Left ventricle myocardium superior (tissue), 1 donor: ENCODE measurements at regions of chr11 and their contacts with region 1.

Region 1: GRCh38 chr11:121451986-121452608 is at the start of gene SORL1:
- DNase-seq: peak; percentile 87
- ATAC-seq: peak; percentile 95
- total RNA-seq, gene SORL1: 11.9 TPM

Region 2: DNA sequence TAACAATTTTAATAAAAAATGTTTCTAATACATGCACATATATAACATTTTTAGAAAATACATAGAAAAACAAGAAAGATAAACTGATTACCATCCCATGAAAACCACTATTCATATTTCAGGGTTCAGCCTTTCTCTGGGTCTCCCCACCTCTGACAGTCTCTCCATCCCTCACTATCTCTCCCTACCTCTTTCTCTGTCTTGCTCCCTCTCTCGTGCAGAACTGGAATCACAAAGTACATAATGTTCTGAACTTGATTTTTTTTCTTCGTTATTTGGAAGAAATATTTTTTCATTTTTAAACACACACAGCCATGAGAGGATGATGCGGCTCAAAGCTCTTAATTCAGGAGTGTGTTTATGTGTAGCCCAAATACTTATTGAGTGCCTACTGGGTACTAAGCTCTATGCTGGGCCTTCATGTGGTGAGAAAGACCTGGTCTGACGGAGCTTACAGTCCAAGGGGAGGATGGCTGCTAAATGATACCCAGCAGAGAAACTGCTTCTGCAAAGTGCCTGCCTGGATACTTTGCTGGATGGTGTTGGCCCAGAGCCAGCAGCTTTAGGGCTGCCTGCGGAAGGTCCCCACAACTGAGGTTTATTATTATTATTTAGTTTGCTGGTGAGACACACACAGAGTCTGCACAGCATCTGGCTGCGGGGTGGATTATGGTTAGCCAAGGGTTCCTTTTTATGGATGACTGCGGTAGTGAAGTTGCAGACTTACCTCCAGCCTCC is 117.0 kb before region 1 on chr11:
- intact Hi-C with region 1: loop called (anchors 10 kb)
- DNase-seq: no peak
- ATAC-seq: no peak

Region 3: DNA sequence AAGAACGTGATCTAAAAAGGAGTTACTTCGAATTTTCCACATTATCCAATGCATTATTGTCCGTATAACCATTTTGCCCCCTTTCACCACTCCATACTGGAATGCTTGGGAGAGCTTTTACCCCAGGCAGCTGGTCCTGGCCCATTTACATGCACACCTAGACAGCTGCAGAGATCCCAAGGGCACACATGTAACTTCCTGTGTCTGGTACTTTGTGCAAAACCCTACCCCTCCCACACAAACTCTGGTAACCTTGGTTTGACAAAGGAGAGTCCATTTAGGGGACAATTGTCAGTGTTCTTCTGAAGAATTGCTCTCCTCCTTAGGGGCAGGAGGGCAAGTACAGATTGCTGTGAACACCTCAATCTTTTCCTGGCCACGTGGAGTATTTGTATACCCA is 57.3 kb before region 1 on chr11:
- intact Hi-C with region 1: no loop called
- DNase-seq: no peak
- ATAC-seq: no peak

Region 4: GRCh38 chr11:122202951-122203456 is 750.9 kb after region 1 on chr11:
- intact Hi-C with region 1: no loop called
- DNase-seq: peak; percentile 81
- ATAC-seq: peak; percentile 91

Region 5: GRCh38 chr11:122933416-122933815 is 1481.3 kb after region 1 on chr11:
- intact Hi-C with region 1: no loop called
- DNase-seq: no peak
- ATAC-seq: peak; percentile 28